Dendritic cell treated with granulocyte-macrophage colony-stimulating factor and Interleukin-4, amounts not matched to agents 40 ng/mL and 50 ng/mL, for 4 days (primary cell): ENCODE measurements at regions of chr10 and their contacts with region 1.

Region 1: DNA sequence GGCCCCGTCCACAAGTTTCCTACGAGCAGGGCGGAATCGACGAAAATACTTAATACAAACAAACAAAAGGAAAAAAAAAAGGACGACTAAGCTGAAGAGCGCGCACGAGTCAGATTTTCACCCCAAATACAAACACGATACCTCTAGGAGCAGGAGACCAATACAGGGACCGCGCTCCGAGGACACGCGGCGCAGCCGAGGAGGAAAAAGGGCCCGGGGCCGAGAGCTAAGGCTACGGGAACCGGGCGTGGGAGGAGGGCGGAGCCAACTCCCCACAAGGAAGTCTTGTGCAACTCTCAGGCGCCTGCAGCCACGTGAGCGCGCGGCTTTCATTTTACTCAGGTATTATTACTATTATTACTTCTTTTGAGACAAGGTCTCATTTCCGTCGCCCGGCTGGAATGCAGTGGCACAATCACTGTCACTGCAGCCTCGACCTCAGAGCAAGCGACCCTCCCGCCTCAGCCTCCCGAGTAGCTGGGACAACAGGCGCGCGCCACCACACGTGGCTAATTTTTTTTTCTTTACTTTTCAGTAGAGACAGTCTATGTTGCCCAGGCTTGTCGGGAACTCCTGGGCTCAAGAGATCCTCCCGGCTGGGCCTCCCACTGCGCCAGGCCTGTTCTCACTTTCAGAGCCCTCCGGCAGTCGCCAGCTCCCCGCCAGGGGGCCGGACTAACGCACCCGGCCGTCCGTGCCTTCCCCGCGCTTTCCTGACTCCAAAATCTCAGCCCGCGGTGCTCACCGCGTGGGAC is 1.2 kb downstream of the HNRNPF start:
- H3K4me3 Mint-ChIP-seq: peak overlapping the region; percentile 88
- H3K27ac Mint-ChIP-seq: peak overlapping the region; percentile 98
- H3K4me1 Mint-ChIP-seq: peaks cover 50% of the 10 kb centered on the region
- H3K27me3 Mint-ChIP-seq: no peaks in the 10 kb centered on the region

Region 2: DNA sequence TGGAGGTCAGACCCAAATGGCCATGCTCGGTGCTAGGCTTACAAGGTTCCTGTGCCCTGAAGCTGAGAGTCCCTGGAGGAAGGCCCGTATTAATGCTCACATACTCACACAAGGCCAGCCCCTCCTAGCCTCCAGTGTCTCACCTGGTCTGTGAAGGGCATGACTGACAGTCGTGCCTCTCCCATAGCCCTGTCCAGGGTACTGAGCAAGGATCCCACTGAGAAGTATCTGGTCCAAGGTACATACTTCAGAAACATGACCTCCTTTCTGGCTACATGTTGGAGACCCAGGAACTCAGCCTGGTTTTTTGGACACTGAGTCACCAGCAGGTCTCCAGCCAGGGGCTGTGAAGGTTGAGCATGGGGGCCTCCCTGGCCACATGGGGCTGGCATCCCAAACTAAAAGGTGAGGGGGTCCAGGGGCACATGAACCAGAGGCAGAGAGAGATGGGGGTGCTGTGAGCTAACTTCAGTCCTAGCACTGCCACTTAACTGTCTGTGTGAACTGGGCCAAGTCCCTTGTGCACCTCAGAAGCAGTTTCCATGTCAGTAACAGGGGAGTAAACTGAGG is 123.3 kb before region 1 on chr10:
- intact Hi-C with region 1: no loop called
- H3K4me3 Mint-ChIP-seq: no peak overlapping the region
- H3K27ac Mint-ChIP-seq: no peak overlapping the region
- H3K4me1 Mint-ChIP-seq: peaks cover 17% of the 10 kb centered on the region
- H3K27me3 Mint-ChIP-seq: peaks cover 40% of the 10 kb centered on the region

Region 3: DNA sequence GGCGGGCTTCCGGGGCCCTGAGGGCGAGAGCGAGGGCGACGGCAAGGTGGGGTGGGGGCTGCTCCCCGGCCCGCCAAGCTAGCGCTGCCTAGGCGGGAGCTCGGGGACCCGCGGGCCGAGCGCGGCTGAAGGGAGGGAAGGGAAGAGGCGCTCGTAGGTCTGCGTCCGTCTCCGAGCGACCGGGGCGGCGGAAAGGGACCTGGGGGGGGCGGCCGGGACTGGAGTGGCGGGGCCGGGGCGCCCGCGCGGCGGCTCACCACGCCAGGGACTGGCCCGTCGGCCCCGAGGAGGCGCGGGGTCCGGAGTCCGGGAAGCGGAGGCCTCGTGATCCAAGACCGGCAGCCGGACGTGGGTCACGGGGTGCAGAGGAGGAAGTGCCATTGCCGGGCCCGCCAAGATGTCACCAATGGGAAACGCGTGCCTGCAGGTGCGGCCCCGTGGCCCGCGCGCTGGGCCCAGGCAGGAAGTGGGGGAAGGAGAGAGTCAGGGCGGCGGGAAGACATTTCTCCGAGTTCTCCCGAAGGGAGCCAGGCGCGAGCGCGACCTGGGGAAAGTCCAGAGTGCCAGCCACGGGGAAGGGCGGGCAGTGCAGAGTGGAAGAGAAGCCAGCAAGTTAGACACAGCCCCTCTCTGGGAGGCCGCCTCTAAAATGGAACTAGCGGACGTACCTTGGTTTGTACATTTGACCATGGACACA is 10.7 kb before region 1 on chr10:
- intact Hi-C with region 1: loop called (anchors 1 kb)
- H3K4me3 Mint-ChIP-seq: peak overlapping the region; percentile 82
- H3K27ac Mint-ChIP-seq: peak overlapping the region; percentile 83
- H3K4me1 Mint-ChIP-seq: peaks cover 83% of the 10 kb centered on the region
- H3K27me3 Mint-ChIP-seq: no peaks in the 10 kb centered on the region

Region 4: DNA sequence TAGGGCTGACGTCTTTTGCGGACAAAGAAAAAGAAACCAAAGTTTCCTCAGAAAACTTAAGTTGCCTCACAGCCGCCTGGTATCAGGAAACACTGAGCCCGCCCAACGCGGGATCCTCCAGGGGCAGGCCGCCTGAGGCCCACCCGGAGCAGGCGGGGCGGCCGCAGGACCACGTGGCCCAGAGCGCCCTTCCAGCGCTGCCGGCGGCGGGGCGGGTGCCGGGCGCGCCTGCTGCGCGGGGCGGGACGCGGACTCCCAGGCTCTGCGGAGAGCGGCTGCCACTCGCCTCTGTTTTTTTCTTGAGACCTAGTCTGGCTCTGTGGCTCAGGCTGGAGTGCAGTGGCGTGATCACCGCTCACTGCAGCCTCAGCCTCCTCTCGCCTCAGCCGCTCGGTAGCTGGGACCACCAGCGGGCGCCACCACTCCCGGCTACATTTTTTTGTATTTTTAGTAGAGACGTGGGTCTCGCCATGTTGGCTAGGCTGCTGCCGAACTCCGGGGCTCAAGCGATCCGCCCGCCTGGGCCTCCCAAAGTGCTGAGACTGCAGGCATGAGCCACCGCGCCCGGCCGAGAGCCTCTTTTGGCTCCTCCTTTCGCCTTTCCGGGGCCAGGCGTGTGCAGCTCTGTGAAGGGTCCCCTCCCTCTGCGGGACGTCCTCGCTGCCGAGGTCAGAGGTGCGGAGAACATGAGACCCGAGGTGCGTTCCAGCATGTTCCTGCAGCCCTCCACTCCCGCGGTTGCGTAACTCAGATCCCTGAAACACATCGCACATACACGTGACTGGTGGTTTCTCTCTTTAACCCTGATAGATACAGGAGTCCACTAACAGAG is 12.8 kb after region 1 on chr10:
- intact Hi-C with region 1: loop called (anchors 1 kb)
- H3K4me3 Mint-ChIP-seq: peak overlapping the region; percentile 89
- H3K27ac Mint-ChIP-seq: peak overlapping the region; percentile 100
- H3K4me1 Mint-ChIP-seq: peaks cover 36% of the 10 kb centered on the region
- H3K27me3 Mint-ChIP-seq: no peaks in the 10 kb centered on the region

Region 5: GRCh38 chr10:43640603-43641002 is 232.8 kb after region 1 on chr10:
- intact Hi-C with region 1: no loop called
- H3K4me3 Mint-ChIP-seq: no peak overlapping the region
- H3K27ac Mint-ChIP-seq: no peak overlapping the region
- H3K4me1 Mint-ChIP-seq: no peaks in the 10 kb centered on the region
- H3K27me3 Mint-ChIP-seq: no peaks in the 10 kb centered on the region